ENCODE measurements at regions of chr16 and their contacts with region 1.

Region 1: GRCh38 chr16:81314603-81315270 is at the start of gene GAN:
- DNase-seq: peak; percentile 95
- ATAC-seq: peak; percentile 91
- H3K4me3 ChIP-seq: peak within 1 kb of the TSS; percentile 92
- H3K27ac ChIP-seq: peak within 1 kb of the TSS; percentile 71
- H3K4me1 ChIP-seq: peaks cover 12% of the 10 kb centered on the region
- H3K27me3 ChIP-seq: no peaks in the 10 kb centered on the region
- CTCF ChIP-seq: no peak
- POLR2A ChIP-seq: peak; percentile 75
- RAD21 ChIP-seq: no peak
- total RNA-seq, gene GAN: 5.7 and 9.2 TPM in 2 replicates

Region 2: GRCh38 chr16:81095953-81096717 is 218.6 kb before region 1 on chr16 and contains the start of gene GCSH:
- CTCF ChIA-PET with region 1: no interaction called
- POLR2A ChIA-PET with region 1: no interaction called
- dilution Hi-C with region 1: no loop called
- in situ Hi-C with region 1: no loop called
- intact Hi-C with region 1: loop called (anchors 10 kb)
- DNase-seq: peak; percentile 98
- ATAC-seq: peak; percentile 99
- H3K4me3 ChIP-seq: peak within 1 kb of the TSS; percentile 73
- H3K27ac ChIP-seq: peak within 1 kb of the TSS; percentile 42; the same call in 1 of the 2 replicates
- H3K4me1 ChIP-seq: 0 out of 2 replicates have a peak, but pooled peaks cover 2% of the 10 kb centered on the region
- H3K27me3 ChIP-seq: no peaks in the 10 kb centered on the region
- CTCF ChIP-seq: no peak
- POLR2A ChIP-seq: no peak
- RAD21 ChIP-seq: no peak
- total RNA-seq, gene GCSH: 9.3 and 19.7 TPM in 2 replicates

Region 3: DNA sequence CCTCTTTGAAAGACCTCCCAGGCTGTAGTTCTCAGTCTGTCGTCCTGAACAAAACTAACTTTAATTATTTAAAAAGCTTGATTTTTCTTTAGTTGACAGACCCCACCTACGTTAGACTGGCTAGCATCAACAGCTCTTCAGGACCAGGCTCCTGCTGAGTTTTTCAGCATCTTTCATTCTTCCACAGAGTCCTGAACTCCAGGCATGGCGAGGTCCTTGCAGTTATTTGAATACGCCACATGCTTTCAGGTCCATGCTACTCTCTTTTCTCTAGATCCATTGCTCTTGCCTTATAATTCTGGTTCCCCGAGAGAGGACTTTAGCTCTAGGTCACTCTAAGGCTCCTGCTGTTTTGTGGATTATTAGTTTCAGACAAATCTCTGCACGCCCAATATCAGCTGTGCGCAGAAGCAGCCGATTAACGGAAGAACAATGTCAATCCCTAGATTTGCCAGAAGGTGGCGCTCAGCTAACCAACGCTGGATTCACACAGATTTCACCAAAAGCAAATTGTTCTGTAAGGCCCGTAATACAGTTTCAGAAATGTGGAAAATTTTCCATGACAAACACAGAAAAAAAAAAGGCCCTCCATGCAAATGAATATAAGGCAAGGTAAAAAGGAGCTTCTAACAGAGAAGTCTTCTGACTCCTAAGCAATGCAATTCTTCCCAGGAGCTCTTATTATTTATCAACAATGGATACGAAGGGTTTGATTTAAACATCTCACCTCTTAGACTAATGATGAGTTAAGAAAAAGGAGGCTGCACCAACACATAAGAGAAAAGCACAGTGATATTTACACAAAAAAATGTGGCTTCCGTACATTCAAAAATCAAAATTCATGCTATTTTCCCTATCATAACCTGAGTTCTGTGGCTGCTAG is 109.7 kb before region 1 on chr16:
- CTCF ChIA-PET with region 1: interaction called, 7 read pairs
- POLR2A ChIA-PET with region 1: no interaction called
- dilution Hi-C with region 1: no loop called
- in situ Hi-C with region 1: no loop called
- intact Hi-C with region 1: loop called (anchors 10 kb)
- DNase-seq: peak; percentile 64
- ATAC-seq: peak; percentile 90
- H3K4me3 ChIP-seq: no peak overlapping the region
- H3K27ac ChIP-seq: no peak overlapping the region
- H3K4me1 ChIP-seq: peaks cover 3% of the 10 kb centered on the region; the same call in 1 of the 2 replicates
- H3K27me3 ChIP-seq: peaks cover 24% of the 10 kb centered on the region
- CTCF ChIP-seq: peak; percentile 71
- POLR2A ChIP-seq: no peak
- RAD21 ChIP-seq: peak; percentile 64

Region 4: GRCh38 chr16:81238296-81239011 is 76.3 kb before region 1 on chr16 and contains the start of gene BCO1:
- CTCF ChIA-PET with region 1: no interaction called
- POLR2A ChIA-PET with region 1: no interaction called
- dilution Hi-C with region 1: no loop called
- in situ Hi-C with region 1: no loop called
- intact Hi-C with region 1: loop called (anchors 10 kb)
- DNase-seq: peak; percentile 66
- ATAC-seq: peak; percentile 80
- H3K4me3 ChIP-seq: peak within 1 kb of the TSS; percentile 43
- H3K27ac ChIP-seq: peak within 1 kb of the TSS; percentile 71; the same call in 1 of the 2 replicates
- H3K4me1 ChIP-seq: no peaks in the 10 kb centered on the region
- H3K27me3 ChIP-seq: no peaks in the 10 kb centered on the region; the same call in 1 of the 2 replicates
- CTCF ChIP-seq: no peak
- POLR2A ChIP-seq: no peak
- RAD21 ChIP-seq: no peak
- total RNA-seq, gene BCO1: not detected in 2 replicates

Region 5: GRCh38 chr16:81385031-81385756 is 70.5 kb after region 1 on chr16:
- CTCF ChIA-PET with region 1: no interaction called
- POLR2A ChIA-PET with region 1: interaction called, 10 read pairs
- dilution Hi-C with region 1: no loop called
- in situ Hi-C with region 1: no loop called
- intact Hi-C with region 1: no loop called
- DNase-seq: no peak
- ATAC-seq: no peak
- H3K4me3 ChIP-seq: no peak overlapping the region
- H3K27ac ChIP-seq: no peak overlapping the region
- H3K4me1 ChIP-seq: no peaks in the 10 kb centered on the region
- H3K27me3 ChIP-seq: no peaks in the 10 kb centered on the region
- CTCF ChIP-seq: no peak
- POLR2A ChIP-seq: no peak
- RAD21 ChIP-seq: no peak

Region 6: GRCh38 chr16:81645266-81645694 is 330.5 kb after region 1 on chr16:
- CTCF ChIA-PET with region 1: no interaction called
- POLR2A ChIA-PET with region 1: no interaction called
- dilution Hi-C with region 1: no loop called
- in situ Hi-C with region 1: no loop called
- intact Hi-C with region 1: no loop called
- DNase-seq: peak; percentile 85
- ATAC-seq: peak; percentile 61
- H3K4me3 ChIP-seq: no peak overlapping the region
- H3K27ac ChIP-seq: no peak overlapping the region
- H3K4me1 ChIP-seq: peaks cover 20% of the 10 kb centered on the region
- H3K27me3 ChIP-seq: no peaks in the 10 kb centered on the region
- CTCF ChIP-seq: no peak
- POLR2A ChIP-seq: no peak
- RAD21 ChIP-seq: no peak